Left ventricle myocardium superior (tissue), 1 donor: ENCODE measurements at regions of chr1 and their contacts with region 1.

Region 1: GRCh38 chr1:165144757-165145397 is 211.6 kb downstream of the LMX1A start:
- DNase-seq: no peak
- ATAC-seq: peak; percentile 74

Region 2: GRCh38 chr1:164188497-164188896 is 956.4 kb before region 1 on chr1:
- intact Hi-C with region 1: no loop called
- DNase-seq: no peak
- ATAC-seq: no peak

Region 3: GRCh38 chr1:165158780-165159179 is 13.9 kb after region 1 on chr1:
- intact Hi-C with region 1: no loop called
- DNase-seq: no peak
- ATAC-seq: no peak

Region 4: GRCh38 chr1:165169028-165169427 is 24.2 kb after region 1 on chr1:
- intact Hi-C with region 1: no loop called
- DNase-seq: no peak
- ATAC-seq: no peak

Region 5: GRCh38 chr1:165306541-165307434 is 161.9 kb after region 1 on chr1:
- intact Hi-C with region 1: no loop called
- DNase-seq: no peak
- ATAC-seq: no peak

Region 6: DNA sequence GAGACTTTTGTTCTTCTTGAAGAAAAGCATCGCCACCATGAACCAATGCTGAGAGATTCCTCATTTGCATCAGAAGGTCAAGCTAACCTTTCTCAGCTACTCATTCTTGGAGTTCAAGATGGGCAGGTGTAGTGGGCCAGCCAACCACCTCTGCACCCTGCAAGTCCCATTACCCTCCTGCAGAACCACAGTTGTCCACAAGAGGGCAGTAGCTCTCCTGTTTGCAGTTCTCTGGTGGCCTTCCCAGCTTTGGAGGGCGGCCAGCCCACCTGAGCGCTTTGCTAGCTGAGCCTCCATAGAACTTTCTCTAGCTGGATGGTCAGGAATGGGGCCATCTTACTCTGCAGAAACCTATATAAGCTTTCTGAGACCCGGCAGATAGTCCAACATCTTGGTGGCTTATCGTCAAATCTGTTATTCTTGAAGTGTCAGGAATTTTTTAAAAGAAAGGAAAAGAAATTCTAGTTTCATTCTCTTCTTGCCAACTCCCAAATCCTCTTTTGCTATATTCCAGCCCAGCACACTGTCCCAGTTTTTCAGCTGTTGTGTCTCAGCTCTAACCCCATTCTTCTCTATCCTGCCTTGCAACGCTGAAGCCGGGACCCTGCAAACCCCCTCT is 222.6 kb after region 1 on chr1:
- intact Hi-C with region 1: loop called (anchors 10 kb)
- DNase-seq: peak; percentile 78
- ATAC-seq: peak; percentile 62